ENCODE measurements at regions of chr17 and their contacts with region 1.

Region 1: DNA sequence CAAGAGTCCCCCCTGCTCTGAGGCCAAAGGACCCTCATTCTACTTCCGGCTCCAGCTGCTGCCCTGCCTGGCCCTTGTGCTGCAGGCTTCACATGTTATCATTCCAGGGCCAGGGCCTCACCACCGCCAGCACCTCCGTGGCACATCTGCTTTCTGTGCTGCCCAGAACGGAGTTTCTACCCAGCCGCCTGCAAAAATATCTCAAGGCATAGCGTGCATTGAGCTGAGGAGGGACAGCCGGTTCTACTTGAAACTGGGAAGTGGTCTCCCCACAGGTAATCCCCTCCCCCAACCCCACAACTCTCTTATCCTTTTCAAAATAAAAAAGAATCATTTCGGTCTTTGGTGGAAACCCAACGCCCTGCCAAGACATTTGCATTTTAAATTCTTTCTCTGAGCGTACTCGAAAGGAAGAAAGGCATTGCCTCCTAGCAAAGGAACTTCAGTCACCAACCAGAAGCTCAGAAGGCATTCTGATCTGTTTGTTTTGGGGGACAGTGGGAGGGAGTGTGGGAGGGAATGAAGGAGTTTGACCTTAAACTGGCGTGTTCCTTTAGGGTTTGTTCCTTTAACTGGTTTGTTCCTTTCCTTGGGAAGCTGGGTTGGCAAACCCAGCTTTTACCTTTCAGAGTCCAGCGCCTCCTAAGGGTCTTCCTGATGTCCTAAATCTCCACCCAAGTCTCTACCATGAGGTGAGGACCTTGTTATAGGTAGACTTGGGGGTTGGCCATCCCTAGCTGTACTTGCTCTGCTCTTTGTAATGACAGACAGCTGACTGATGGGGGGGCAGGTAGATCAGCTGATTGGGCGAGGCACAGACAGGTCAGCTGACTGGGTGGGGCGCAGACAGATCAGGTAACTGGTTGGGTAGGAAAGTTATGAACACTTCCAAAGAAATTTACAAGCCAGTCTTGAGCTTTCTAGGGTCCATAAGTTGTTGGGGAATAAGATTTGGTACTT is 33.4 kb upstream of the PIK3R6 start:
- DNase-seq: peak in 8 of 9 donors; percentile 5 to 49 (median 33)
- ATAC-seq: no peak
- H3K4me3 ChIP-seq: no peak overlapping the region
- H3K4me3 Mint-ChIP-seq: peak overlapping the region; percentile 12 to 83 (median 64)
- H3K27ac ChIP-seq: peak overlapping the region; percentile 80
- H3K27ac Mint-ChIP-seq: peak overlapping the region in 8 of 9 donors; percentile 78 to 99 (median 96)
- H3K4me1 ChIP-seq: peaks cover 45 to 58% of the 10 kb centered on the region in 2 donors
- H3K4me1 Mint-ChIP-seq: peaks cover 52 to 78% (median 66%) of the 10 kb centered on the region in 7 donors
- H3K27me3 ChIP-seq: no peaks in the 10 kb centered on the region
- H3K27me3 Mint-ChIP-seq: no peaks in the 10 kb centered on the region

Region 2: GRCh38 chr17:8435245-8436168 is 465.4 kb before region 1 on chr17 and contains the start of gene NDEL1:
- CTCF ChIA-PET with region 1: no interaction called
- POLR2A ChIA-PET with region 1: interaction called, 6 read pairs
- intact Hi-C with region 1: loop called (anchors 1 to 5 kb)
- DNase-seq: peak; percentile 97 to 99 (median 99)
- ATAC-seq: peak; percentile 95
- H3K4me3 ChIP-seq: peak within 1 kb of the TSS; percentile 81
- H3K4me3 Mint-ChIP-seq: peak within 1 kb of the TSS; percentile 94 to 99 (median 96)
- H3K27ac ChIP-seq: peak within 1 kb of the TSS; percentile 100
- H3K27ac Mint-ChIP-seq: peak within 1 kb of the TSS; percentile 96 to 100 (median 98)
- H3K4me1 ChIP-seq: peaks cover 10 to 22% of the 10 kb centered on the region in 2 donors
- H3K4me1 Mint-ChIP-seq: peaks cover 9 to 46% (median 37%) of the 10 kb centered on the region in 7 donors
- H3K27me3 ChIP-seq: no peaks in the 10 kb centered on the region
- H3K27me3 Mint-ChIP-seq: no peaks in the 10 kb centered on the region
- total RNA-seq, gene NDEL1: 72.6 to 274 (median 116) TPM

Region 3: GRCh38 chr17:8745586-8746500 is 155.1 kb before region 1 on chr17:
- CTCF ChIA-PET with region 1: no interaction called
- POLR2A ChIA-PET with region 1: no interaction called
- intact Hi-C with region 1: loop called (anchors 2 to 5 kb)
- DNase-seq: peak; percentile 47 to 84 (median 70)
- ATAC-seq: peak; percentile 88
- H3K4me3 ChIP-seq: peak overlapping the region; percentile 80
- H3K4me3 Mint-ChIP-seq: peak overlapping the region; percentile 85 to 94 (median 91)
- H3K27ac ChIP-seq: peak overlapping the region; percentile 67
- H3K27ac Mint-ChIP-seq: peak overlapping the region; percentile 84 to 95 (median 88)
- H3K4me1 ChIP-seq: peaks cover 3 to 21% of the 10 kb centered on the region in 2 donors
- H3K4me1 Mint-ChIP-seq: peaks cover 2 to 34% (median 25%) of the 10 kb centered on the region in 7 donors
- H3K27me3 ChIP-seq: no peaks in the 10 kb centered on the region
- H3K27me3 Mint-ChIP-seq: peaks cover 0 to 21% (median 0%) of the 10 kb centered on the region in 5 donors

Region 4: GRCh38 chr17:8887834-8888703 is 12.8 kb before region 1 on chr17:
- CTCF ChIA-PET with region 1: no interaction called
- POLR2A ChIA-PET with region 1: interaction called, 3 read pairs
- intact Hi-C with region 1: loop called in 1 of 2 experiments (anchors 1 kb)
- DNase-seq: no peak
- ATAC-seq: no peak
- H3K4me3 ChIP-seq: no peak overlapping the region
- H3K4me3 Mint-ChIP-seq: no peak overlapping the region
- H3K27ac ChIP-seq: no peak overlapping the region
- H3K27ac Mint-ChIP-seq: no peak overlapping the region
- H3K4me1 ChIP-seq: peaks cover 0 to 4% of the 10 kb centered on the region in 2 donors
- H3K4me1 Mint-ChIP-seq: peaks cover 0 to 16% (median 9%) of the 10 kb centered on the region in 7 donors
- H3K27me3 ChIP-seq: no peaks in the 10 kb centered on the region
- H3K27me3 Mint-ChIP-seq: no peaks in the 10 kb centered on the region

Region 5: DNA sequence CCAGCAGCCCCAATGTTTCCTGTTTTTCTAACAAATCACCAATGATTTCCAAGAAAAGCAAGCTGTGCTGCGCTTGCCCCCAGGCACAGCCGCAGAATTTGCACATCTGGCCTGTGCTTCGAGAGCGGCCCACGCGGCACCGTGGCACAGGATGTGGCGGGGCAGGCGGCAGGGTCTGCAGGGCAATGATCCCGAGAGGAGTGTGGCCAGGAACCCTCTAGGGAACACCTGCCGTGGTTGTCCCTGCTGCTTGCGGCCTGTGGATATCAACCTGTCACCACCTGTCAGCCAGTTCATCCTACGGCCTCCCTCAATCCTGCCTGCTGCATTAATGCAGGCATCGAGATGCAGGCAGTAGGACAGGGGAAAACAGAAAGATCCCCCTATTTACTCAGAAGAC is 40.6 kb after region 1 on chr17:
- CTCF ChIA-PET with region 1: interaction called, 3 read pairs
- POLR2A ChIA-PET with region 1: interaction called, 27 read pairs
- intact Hi-C with region 1: loop called (anchors 1 kb)
- DNase-seq: peak in 8 of 9 donors; percentile 54 to 82 (median 76)
- ATAC-seq: peak; percentile 73
- H3K4me3 ChIP-seq: peak overlapping the region; percentile 46
- H3K4me3 Mint-ChIP-seq: peak overlapping the region; percentile 62 to 86 (median 78)
- H3K27ac ChIP-seq: peak overlapping the region; percentile 65
- H3K27ac Mint-ChIP-seq: peak overlapping the region; percentile 88 to 98 (median 97)
- H3K4me1 ChIP-seq: peaks cover 52 to 73% of the 10 kb centered on the region in 2 donors
- H3K4me1 Mint-ChIP-seq: peaks cover 50 to 96% (median 84%) of the 10 kb centered on the region in 7 donors
- H3K27me3 ChIP-seq: no peaks in the 10 kb centered on the region
- H3K27me3 Mint-ChIP-seq: no peaks in the 10 kb centered on the region

Region 6: DNA sequence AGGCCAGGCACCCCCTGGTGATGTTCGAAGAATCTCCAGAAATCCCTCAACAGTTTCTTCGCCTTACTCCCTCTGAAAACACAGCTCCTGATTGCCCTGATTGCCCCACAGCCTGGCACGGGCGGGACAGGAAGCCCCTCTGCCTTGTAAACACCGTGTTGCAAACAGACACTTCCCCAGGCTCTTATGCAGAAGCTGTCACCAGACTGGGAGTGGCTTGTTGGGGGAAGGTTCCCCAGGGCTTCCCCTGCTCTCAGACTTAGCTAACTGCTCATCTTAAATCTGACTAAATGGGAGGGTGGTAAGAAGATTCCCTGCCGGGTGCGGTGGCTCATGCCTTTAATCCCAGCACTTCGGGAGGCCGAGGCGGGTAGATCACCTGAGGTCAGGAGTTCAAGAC is 53.4 kb after region 1 on chr17:
- CTCF ChIA-PET with region 1: interaction called, 8 read pairs
- POLR2A ChIA-PET with region 1: interaction called, 10 read pairs
- intact Hi-C with region 1: loop called (anchors 1 kb)
- DNase-seq: peak; percentile 52 to 93 (median 83)
- ATAC-seq: peak; percentile 95
- H3K4me3 ChIP-seq: peak overlapping the region; percentile 33
- H3K4me3 Mint-ChIP-seq: peak overlapping the region; percentile 76 to 94 (median 86)
- H3K27ac ChIP-seq: peak overlapping the region; percentile 70
- H3K27ac Mint-ChIP-seq: peak overlapping the region; percentile 84 to 98 (median 96)
- H3K4me1 ChIP-seq: peaks cover 81 to 99% of the 10 kb centered on the region in 2 donors
- H3K4me1 Mint-ChIP-seq: peaks cover 78 to 100% (median 98%) of the 10 kb centered on the region in 7 donors
- H3K27me3 ChIP-seq: no peaks in the 10 kb centered on the region
- H3K27me3 Mint-ChIP-seq: no peaks in the 10 kb centered on the region

Region 7: DNA sequence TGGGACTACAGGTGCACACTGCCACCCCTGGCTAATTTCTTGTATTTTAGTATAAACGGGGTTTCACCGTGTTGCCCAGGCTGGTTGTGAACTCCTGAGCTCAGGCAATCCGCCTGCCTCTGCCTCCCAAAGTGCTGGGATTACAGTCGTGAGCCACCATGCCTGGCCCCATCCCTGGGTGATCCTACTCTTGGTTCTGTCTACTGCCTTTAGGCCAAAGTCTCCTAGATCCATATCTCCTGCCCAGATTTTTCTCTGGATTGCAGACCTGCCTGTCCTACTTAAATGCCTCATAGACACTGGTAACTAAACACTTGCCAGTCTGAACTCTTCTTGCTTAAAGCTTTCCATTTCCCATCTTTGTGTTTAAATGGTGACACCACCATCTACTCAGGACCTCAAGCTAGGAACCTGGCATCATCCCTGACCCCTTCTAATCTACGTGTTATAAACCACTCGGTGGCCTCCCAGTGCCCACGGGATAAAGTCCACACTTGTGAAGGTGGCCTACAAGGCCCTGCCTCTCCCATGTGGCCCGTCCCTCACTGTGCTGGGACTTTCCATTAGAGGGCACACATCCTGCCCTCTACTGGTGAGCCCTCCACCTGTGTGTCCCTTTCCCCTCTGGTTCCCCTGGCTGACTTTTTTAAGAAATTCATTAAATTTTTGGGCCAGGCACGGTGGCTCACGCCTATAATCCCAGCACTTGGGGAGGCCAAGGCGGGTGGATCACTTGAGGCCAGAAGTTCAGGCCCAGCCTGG is 795.5 kb after region 1 on chr17:
- CTCF ChIA-PET with region 1: no interaction called
- POLR2A ChIA-PET with region 1: no interaction called
- intact Hi-C with region 1: no loop called
- DNase-seq: no peak
- ATAC-seq: no peak
- H3K4me3 ChIP-seq: no peak overlapping the region
- H3K4me3 Mint-ChIP-seq: no peak overlapping the region
- H3K27ac ChIP-seq: no peak overlapping the region
- H3K27ac Mint-ChIP-seq: no peak overlapping the region
- H3K4me1 ChIP-seq: no peaks in the 10 kb centered on the region
- H3K4me1 Mint-ChIP-seq: no peaks in the 10 kb centered on the region
- H3K27me3 ChIP-seq: peaks cover 0 to 4% of the 10 kb centered on the region in 2 donors
- H3K27me3 Mint-ChIP-seq: peaks cover 0 to 24% (median 6%) of the 10 kb centered on the region in 5 donors